ENCODE measurements at regions of chr14 and their contacts with region 1.

Region 1: DNA sequence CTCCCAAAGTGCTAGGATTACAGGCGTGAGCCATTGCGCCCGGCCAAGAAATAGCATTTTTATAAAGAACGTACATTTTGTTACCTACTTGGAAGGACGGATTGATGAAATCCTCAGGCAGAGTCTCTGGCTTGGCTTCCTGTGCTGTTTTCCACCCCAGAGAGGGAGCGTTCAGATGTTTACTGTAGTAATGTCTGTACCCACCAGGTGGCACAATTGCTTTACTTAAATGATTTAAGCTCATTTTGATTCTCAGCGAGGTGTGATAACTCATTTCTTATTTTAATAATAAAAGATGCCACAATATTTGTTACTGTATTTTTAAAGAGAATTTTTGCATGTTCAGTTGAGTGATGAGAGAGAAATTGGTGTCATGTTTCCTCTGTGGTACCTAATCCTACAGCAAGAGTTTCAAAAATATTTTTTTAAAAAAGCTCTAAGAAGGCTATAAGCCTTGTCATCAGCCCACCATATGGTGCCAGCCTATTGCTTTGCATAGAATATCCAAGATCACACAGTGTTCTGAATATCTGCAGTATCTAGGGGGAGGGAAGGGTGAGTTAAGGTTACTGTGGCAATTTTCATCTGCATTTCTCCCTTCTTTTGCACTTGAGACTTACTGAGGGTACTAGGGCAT is 82.6 kb upstream of the TRAF3 start:
- DNase-seq: no peak
- ATAC-seq: peak; percentile 77
- H3K4me3 Mint-ChIP-seq: no peak overlapping the region
- H3K27ac Mint-ChIP-seq: no peak overlapping the region
- H3K4me1 Mint-ChIP-seq: peaks cover 41% of the 10 kb centered on the region
- H3K27me3 Mint-ChIP-seq: no peaks in the 10 kb centered on the region
- CTCF ChIP-seq: no peak

Region 2: DNA sequence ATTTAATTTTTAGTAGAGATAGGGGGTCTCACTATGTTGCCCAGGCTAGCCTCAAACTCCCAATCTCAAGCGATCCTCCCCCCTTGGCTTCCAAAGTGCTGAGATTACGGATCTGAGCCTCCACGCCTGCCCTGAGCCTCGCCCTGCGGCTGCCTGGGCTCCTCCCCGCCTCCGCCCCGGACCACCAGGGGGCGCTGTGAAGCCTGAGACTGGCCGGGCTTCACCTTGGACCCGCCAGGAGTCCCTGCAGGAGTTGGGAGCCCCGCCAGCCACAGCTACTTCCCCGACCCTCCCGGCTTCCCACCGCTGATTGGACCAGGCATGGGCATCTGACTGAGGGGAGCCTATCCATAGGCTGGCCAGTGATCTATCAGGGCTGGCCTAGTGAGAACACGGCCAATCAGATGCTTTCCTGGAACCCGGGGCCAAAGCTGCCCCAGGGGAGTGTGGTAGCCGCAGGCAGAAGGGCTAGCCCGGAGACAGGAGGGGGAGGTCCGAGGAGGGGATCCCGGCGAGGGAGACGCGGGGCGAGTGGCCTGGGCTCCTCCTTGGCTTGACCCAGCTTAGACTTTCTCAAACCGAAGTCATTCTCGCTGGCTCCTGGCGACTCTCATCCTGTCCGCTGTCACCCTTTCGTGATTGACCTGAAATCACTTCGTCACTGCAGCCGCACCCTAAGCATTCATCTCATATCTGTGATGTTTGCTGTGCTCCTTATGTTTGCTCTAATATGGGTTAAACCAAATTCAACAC is 170.0 kb before region 1 on chr14:
- CTCF ChIA-PET with region 1: interaction called, 19 read pairs
- POLR2A ChIA-PET with region 1: no interaction called
- intact Hi-C with region 1: loop called (anchors 5 kb)
- DNase-seq: peak; percentile 97
- ATAC-seq: peak; percentile 96
- H3K4me3 Mint-ChIP-seq: peak overlapping the region; percentile 91
- H3K27ac Mint-ChIP-seq: peak overlapping the region; percentile 81
- H3K4me1 Mint-ChIP-seq: peaks cover 28% of the 10 kb centered on the region
- H3K27me3 Mint-ChIP-seq: no peaks in the 10 kb centered on the region
- CTCF ChIP-seq: peak; percentile 61

Region 3: DNA sequence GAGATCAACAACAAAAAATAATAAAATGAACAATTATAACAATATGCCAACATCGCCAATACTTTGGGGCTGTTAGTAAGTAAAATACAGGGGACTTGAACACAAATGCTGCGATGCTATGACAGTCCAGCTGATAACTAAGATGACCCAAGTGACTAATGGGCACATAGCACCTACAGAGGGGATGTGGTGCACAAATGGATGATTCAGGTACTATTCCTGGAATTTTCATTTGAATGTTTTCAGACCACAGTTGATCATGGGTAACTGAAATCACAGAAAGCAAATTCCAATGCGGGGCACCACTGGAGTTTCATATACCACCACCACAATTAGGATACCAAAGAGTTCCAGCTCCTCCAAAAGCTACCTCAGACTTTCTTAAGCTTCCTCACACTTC is 19.3 kb before region 1 on chr14:
- CTCF ChIA-PET with region 1: no interaction called
- POLR2A ChIA-PET with region 1: no interaction called
- intact Hi-C with region 1: no loop called
- DNase-seq: no peak
- ATAC-seq: no peak
- H3K4me3 Mint-ChIP-seq: no peak overlapping the region
- H3K27ac Mint-ChIP-seq: no peak overlapping the region
- H3K4me1 Mint-ChIP-seq: peaks cover 24% of the 10 kb centered on the region
- H3K27me3 Mint-ChIP-seq: no peaks in the 10 kb centered on the region
- CTCF ChIP-seq: no peak

Region 4: DNA sequence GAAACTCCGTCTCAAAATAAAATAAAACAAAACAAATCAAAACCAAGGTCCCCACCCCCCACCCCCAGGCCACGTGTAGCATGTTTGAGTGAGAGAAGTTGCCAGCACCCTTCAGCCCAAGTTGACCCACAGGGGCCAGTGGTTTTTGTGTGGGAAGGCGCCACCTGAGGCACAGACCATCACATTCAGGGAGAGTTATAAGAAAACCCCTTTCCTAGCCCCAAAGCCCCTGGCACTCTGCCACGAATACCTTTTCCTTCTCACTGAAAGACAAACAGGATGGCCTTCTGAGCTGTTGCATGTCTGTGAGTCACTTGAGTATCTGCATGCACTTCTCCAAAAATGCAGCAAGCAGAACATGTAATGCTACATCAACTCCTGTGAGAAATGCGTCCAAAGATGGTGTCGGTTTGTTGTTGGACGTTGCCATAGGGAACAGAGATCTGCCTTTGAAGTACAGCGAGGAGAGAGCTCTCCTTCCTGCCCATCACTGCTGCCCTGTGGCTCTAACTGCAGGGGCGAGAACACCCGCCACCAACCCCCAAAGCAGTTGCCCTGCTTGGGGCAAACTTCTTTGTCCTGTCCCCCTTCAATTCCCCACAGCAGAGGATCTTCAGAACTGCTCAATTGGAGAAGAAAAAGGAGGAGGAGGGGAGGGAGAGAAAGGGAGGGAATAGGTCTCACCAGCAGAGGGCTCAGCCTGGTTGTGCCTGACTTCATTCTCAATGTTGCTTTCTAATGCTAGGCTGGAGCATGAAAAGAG is 79.9 kb after region 1 on chr14:
- CTCF ChIA-PET with region 1: interaction called, 17 read pairs
- POLR2A ChIA-PET with region 1: interaction called, 9 read pairs
- intact Hi-C with region 1: loop called (anchors 2 kb)
- DNase-seq: peak; percentile 64
- ATAC-seq: peak; percentile 53
- H3K4me3 Mint-ChIP-seq: peak overlapping the region; percentile 70
- H3K27ac Mint-ChIP-seq: peak overlapping the region; percentile 96
- H3K4me1 Mint-ChIP-seq: peaks cover 76% of the 10 kb centered on the region
- H3K27me3 Mint-ChIP-seq: no peaks in the 10 kb centered on the region
- CTCF ChIP-seq: no peak

Region 5: GRCh38 chr14:102917469-102918211 is 223.0 kb after region 1 on chr14:
- CTCF ChIA-PET with region 1: interaction called, 48 read pairs
- POLR2A ChIA-PET with region 1: interaction called, 6 read pairs
- intact Hi-C with region 1: loop called (anchors 1 kb)
- DNase-seq: peak; percentile 64
- ATAC-seq: peak; percentile 23
- H3K4me3 Mint-ChIP-seq: no peak overlapping the region
- H3K27ac Mint-ChIP-seq: peak overlapping the region; percentile 42
- H3K4me1 Mint-ChIP-seq: peaks cover 18% of the 10 kb centered on the region
- H3K27me3 Mint-ChIP-seq: no peaks in the 10 kb centered on the region
- CTCF ChIP-seq: no peak

Region 6: GRCh38 chr14:103078093-103078749 is 383.6 kb after region 1 on chr14:
- CTCF ChIA-PET with region 1: no interaction called
- POLR2A ChIA-PET with region 1: no interaction called
- intact Hi-C with region 1: loop called (anchors 5 kb)
- DNase-seq: peak; percentile 46
- ATAC-seq: peak; percentile 66
- H3K4me3 Mint-ChIP-seq: no peak overlapping the region
- H3K27ac Mint-ChIP-seq: no peak overlapping the region
- H3K4me1 Mint-ChIP-seq: peaks cover 5% of the 10 kb centered on the region
- H3K27me3 Mint-ChIP-seq: no peaks in the 10 kb centered on the region
- CTCF ChIP-seq: no peak

Region 7: GRCh38 chr14:103185051-103185992 is 490.7 kb after region 1 on chr14:
- CTCF ChIA-PET with region 1: interaction called, 5 read pairs
- POLR2A ChIA-PET with region 1: no interaction called
- intact Hi-C with region 1: loop called (anchors 5 kb)
- DNase-seq: no peak
- ATAC-seq: peak; percentile 28
- H3K4me3 Mint-ChIP-seq: no peak overlapping the region
- H3K27ac Mint-ChIP-seq: no peak overlapping the region
- H3K4me1 Mint-ChIP-seq: peaks cover 7% of the 10 kb centered on the region
- H3K27me3 Mint-ChIP-seq: peaks cover 40% of the 10 kb centered on the region
- CTCF ChIP-seq: peak; percentile 61

Measured in activated B cell treated with CpG ODN at 0.5 μM for 24 hours (primary cell).